IMR-90 (cell line): ENCODE measurements at regions of chr2 and their contacts with region 1.

Region 1: DNA sequence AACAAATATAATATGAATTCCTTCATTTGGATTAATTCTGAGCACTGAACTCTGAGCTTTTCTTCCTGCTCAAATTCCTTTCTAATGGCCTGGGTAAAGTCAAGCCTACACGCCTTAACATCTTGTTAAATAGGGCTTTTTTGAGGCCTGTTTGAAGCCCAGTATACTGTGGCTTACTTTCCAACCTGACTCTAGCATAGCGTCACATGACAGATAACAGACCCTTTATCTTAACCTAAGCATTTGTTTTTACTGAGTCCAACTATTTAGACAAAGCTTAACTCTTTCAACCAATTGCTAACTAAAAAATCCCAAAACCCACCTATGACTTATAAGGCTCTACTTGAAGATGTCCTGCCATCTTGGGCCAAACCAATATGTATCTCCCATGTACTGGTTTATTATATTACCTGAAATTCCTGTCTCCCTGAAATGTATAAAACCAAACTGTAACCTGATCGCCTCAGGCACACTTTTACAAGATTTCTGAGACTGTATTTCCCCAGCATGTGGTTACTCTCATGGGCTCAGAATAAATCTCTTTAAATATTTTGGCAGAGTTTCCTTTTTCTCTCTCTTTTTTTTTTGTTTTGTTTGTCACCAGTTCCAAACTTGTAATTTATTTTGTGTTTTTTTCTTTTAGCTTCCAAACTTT is 271.1 kb upstream of the VWC2L start:
- DNase-seq: no peak
- ATAC-seq: no peak
- H3K4me3 ChIP-seq: no peak overlapping the region
- H3K27ac ChIP-seq: no peak overlapping the region
- H3K4me1 ChIP-seq: no peaks in the 10 kb centered on the region
- H3K27me3 ChIP-seq: no peaks in the 10 kb centered on the region
- CTCF ChIP-seq: no peak
- POLR2A ChIP-seq: no peak
- RAD21 ChIP-seq: no peak

Region 2: GRCh38 chr2:214117054-214117453 is 22.7 kb before region 1 on chr2:
- CTCF ChIA-PET with region 1: no interaction called
- POLR2A ChIA-PET with region 1: no interaction called
- dilution Hi-C with region 1: no loop called
- in situ Hi-C with region 1: no loop called
- intact Hi-C with region 1: loop called (anchors 1 kb)
- DNase-seq: no peak
- ATAC-seq: no peak
- H3K4me3 ChIP-seq: no peak overlapping the region
- H3K27ac ChIP-seq: no peak overlapping the region
- H3K4me1 ChIP-seq: no peaks in the 10 kb centered on the region
- H3K27me3 ChIP-seq: no peaks in the 10 kb centered on the region
- CTCF ChIP-seq: no peak
- POLR2A ChIP-seq: no peak
- RAD21 ChIP-seq: no peak